ENCODE measurements at regions of chr1 and their contacts with region 1.

Region 1: DNA sequence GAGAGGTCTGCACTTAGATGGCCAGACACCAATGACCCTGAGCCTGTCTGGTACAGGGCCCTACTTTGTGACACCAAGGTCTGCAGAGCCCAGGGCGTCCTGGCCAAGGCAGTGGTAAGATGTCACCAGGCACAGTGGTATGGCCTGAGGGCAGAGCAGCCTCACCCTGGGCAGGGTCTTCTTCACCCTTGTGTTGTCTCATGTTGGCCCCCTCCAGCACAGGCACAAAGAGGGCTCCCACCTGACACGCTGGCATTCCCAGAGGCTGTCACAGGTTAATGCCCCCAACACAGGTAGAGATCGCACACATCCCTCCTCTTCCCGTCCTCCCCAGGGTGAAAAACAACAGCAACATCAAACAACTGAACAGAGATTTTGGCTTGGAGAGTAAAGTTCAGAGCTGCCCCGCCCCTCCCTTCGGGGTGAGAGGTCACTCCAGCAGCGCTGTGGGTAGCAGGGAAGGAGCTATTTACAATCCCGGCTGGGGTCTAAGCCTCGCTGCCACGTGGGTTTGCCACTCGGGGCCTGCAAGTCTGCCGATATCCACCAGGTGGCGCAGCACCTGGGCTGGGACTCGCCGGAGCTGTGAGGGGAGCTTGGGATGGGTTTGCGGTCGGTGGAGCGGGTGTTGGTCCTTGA is 12.6 kb downstream of the EFNA3 start:
- DNase-seq: peak; percentile 92

Region 2: GRCh38 chr1:154730259-154730658 is 360.9 kb before region 1 on chr1:
- CTCF ChIA-PET with region 1: no interaction called
- POLR2A ChIA-PET with region 1: no interaction called
- DNase-seq: no peak

Region 3: GRCh38 chr1:155073361-155074242 is 17.6 kb before region 1 on chr1:
- CTCF ChIA-PET with region 1: interaction called, 11 read pairs
- POLR2A ChIA-PET with region 1: no interaction called
- DNase-seq: no peak

Region 4: DNA sequence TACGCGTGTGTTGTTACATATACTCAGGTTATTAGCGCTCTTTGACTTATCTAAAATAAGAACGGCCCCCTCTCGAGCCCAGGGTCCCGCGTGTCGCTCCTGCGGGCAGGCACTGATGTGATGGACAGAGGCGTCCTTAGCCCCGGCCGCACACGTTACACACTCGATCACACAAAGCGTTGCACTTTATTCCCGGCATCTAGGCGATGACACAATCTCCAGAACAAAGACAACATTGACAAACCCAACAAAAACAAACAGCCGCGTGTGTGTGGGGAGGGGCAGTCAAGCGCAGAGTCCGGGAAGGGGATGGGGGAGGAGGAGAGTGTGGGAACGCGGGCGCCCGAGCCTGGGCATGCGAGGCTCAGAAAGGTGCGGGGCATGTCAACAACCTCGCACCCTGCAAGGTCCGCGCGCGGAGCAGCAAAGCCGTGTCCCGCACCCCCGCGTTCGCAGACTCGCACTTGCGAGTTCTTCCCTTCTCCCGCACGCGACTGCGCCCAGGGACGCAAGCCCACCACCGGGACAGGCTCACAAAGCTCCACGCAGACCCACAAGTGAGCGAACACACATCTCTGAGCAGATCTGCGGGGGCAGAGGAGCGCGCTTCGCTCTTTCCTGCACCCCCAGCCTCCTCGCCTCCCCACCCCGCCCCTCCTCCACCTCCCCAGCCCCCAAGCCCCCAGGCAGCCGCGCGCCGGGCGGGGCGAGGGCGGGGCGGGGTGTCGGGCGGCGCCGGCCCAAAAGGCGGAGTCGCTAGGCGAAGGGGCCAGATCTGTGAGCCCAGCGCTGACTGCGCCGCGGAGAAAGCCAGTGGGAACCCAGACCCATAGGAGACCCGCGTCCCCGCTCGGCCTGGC is 36.1 kb after region 1 on chr1 and contains the start of gene EFNA1:
- CTCF ChIA-PET with region 1: interaction called, 14 read pairs
- POLR2A ChIA-PET with region 1: interaction called, 7 read pairs
- DNase-seq: peak; percentile 71

Region 5: GRCh38 chr1:155135415-155136028 is 44.3 kb after region 1 on chr1 and contains the start of gene SLC50A1:
- CTCF ChIA-PET with region 1: interaction called, 14 read pairs
- POLR2A ChIA-PET with region 1: interaction called, 11 read pairs
- DNase-seq: peak; percentile 99

Region 6: GRCh38 chr1:155167166-155168104 is 76.2 kb after region 1 on chr1:
- CTCF ChIA-PET with region 1: interaction called, 89 read pairs
- POLR2A ChIA-PET with region 1: interaction called, 25 read pairs
- DNase-seq: peak; percentile 90

Measured in HEK293T (cell line).